Breast epithelium (tissue), 4 donors: ENCODE measurements at regions of chr18 and their contacts with region 1.

Region 1: GRCh38 chr18:26521617-26522016 is 26.7 kb downstream of the KCTD1 start:
- DNase-seq: no peak
- H3K4me3 ChIP-seq: no peak overlapping the region
- H3K27ac ChIP-seq: no peak overlapping the region
- H3K4me1 ChIP-seq: no peaks in the 10 kb centered on the region
- H3K27me3 ChIP-seq: no peaks in the 10 kb centered on the region
- CTCF ChIP-seq: no peak
- POLR2A ChIP-seq: no peak

Region 2: DNA sequence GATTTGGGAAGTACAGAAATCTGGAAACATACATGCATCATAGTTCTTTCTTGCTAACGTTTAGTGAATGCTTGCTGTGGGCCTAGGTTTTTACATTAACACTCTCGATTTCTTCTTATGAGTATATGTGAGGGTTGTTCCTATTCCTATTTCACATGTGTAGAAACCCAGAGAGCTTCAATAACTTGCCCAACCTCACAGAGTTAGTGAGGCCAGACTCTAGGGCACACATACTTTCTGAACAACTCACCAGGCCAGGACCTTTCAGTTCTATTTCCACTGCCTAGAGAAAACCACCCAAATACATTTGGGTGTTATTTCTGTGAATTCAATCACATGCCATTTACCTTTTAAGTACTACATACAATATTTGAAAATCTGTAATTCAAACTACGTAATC is 35.0 kb after region 1 on chr18:
- intact Hi-C with region 1: loop called (anchors 2 kb)
- DNase-seq: no peak
- H3K4me3 ChIP-seq: no peak overlapping the region
- H3K27ac ChIP-seq: peak overlapping the region; percentile 45 to 58
- H3K4me1 ChIP-seq: no peaks in the 10 kb centered on the region
- H3K27me3 ChIP-seq: no peaks in the 10 kb centered on the region
- CTCF ChIP-seq: no peak
- POLR2A ChIP-seq: no peak